Dorsolateral prefrontal cortex (tissue), 120 donors: ENCODE measurements at regions of chr18 and their contacts with region 1.

Region 1: DNA sequence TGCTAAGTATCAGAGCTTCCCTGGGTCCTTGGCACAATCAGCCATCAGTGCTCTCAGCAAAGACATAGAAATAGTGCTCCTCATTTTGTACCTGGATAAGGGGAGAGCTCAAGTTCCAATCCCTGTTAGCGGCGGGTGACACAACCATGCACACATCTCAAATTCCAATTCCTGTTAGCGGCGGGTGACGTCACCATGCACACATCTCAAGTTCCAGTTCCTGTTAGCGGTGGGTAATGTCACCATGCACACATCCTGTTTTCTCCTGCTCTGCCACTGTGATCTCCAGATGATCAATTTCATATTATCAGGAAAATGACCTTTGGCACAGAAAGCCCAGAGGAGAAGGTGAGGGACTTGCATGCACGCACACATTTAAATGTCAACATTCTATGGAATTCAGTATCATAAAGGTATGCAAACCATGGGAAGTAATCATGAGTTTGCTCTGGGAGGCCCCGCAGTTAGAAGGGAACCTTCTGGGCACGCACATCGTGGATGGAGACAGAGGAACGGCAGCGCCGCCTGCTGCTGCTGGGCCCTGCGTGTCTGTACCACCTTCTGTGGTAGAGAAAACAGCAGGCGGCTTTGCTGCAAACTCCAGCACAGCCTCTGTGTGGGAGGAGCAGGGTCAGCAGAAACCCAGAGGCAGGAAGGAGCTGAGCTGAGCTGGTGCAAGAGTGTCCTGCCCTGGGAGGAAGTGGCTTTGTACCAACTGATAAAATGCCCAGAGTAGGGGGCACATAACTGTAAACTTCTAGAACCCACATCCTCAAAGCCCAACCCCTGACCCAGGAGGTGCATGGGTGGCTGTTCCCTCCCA is 77.8 kb downstream of the MBP start:
- DNase-seq: peak; percentile 35 to 94 (median 92)
- H3K4me3 ChIP-seq: peak overlapping the region in 54 of 59 donors; percentile 1 to 70 (median 46)
- H3K27ac ChIP-seq: peak overlapping the region; percentile 69 to 100 (median 95)
- H3K27me3 ChIP-seq: no peaks in the 10 kb centered on the region
- CTCF ChIP-seq: peak; percentile 39 to 97 (median 88)

Region 2: GRCh38 chr18:76822510-76823160 is 232.2 kb before region 1 on chr18 and contains the start of gene ZNF236:
- intact Hi-C with region 1: loop called in 1 of 2 experiments (anchors 5 kb)
- DNase-seq: peak in 8 of 10 donors; percentile 41 to 77 (median 56)
- H3K4me3 ChIP-seq: peak within 1 kb of the TSS; percentile 74 to 99 (median 92)
- H3K27ac ChIP-seq: peak within 1 kb of the TSS; percentile 87 to 99 (median 95)
- H3K27me3 ChIP-seq: no peaks in the 10 kb centered on the region
- CTCF ChIP-seq: no peak
- total RNA-seq, gene ZNF236: 29.4 to 62.0 (median 40.2) TPM

Region 3: DNA sequence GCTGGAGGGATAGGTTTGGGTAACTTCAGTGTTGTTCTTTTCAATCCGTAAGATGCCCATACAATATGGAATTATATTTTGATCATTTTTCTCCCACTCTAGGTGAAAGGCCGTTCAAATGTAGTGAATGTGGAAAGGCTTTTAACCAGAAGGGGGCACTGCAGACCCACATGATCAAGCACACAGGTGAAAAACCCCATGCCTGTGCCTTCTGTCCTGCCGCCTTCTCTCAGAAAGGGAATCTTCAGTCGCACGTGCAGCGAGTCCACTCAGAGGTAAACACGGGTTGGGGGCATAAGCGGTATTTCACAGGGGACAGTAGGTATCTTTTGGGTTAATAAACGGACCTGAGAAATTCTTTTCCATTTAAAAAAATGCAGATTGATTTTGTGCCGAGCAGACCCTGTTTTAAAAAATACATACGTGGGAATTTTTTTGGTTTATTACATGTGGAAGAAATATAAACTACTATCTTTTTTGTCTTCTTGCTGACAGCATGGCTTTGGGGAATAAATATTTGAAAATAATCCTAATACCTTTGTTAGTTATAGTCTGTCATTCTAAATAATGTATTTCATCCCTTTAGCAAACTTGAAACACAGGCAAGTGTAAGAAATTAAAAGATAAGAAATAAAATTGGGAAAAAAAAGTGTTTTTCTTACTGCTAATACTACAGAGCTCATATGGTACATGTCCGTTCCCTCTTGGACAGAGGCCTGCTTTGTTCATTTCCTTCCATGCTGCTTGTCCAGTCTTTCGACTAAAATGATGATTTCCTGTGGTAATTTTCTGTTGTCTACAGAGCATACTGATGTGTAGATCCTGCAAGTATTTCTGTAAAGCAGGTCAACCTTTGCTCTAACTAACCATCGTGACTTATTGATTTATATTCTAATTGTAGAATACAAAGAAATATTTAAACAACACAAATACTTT is 179.2 kb before region 1 on chr18:
- intact Hi-C with region 1: loop called in 1 of 2 experiments (anchors 5 kb)
- DNase-seq: peak in 3 of 10 donors; percentile 36 to 66 (median 60)
- H3K4me3 ChIP-seq: peak overlapping the region in 5 of 59 donors; percentile 3 to 31 (median 18)
- H3K27ac ChIP-seq: peak overlapping the region in 5 of 59 donors; percentile 1 to 62 (median 35)
- H3K27me3 ChIP-seq: no peaks in the 10 kb centered on the region
- CTCF ChIP-seq: peak; percentile 55 to 81 (median 70)

Region 4: GRCh38 chr18:76922107-76922506 is 132.7 kb before region 1 on chr18:
- intact Hi-C with region 1: loop called (anchors 2 to 5 kb)
- DNase-seq: peak in 9 of 10 donors; percentile 59 to 81 (median 75)
- H3K4me3 ChIP-seq: no peak overlapping the region
- H3K27ac ChIP-seq: peak overlapping the region in 2 of 59 donors; percentile 2 to 14
- H3K27me3 ChIP-seq: no peaks in the 10 kb centered on the region
- CTCF ChIP-seq: peak; percentile 33 to 98 (median 79)

Region 5: DNA sequence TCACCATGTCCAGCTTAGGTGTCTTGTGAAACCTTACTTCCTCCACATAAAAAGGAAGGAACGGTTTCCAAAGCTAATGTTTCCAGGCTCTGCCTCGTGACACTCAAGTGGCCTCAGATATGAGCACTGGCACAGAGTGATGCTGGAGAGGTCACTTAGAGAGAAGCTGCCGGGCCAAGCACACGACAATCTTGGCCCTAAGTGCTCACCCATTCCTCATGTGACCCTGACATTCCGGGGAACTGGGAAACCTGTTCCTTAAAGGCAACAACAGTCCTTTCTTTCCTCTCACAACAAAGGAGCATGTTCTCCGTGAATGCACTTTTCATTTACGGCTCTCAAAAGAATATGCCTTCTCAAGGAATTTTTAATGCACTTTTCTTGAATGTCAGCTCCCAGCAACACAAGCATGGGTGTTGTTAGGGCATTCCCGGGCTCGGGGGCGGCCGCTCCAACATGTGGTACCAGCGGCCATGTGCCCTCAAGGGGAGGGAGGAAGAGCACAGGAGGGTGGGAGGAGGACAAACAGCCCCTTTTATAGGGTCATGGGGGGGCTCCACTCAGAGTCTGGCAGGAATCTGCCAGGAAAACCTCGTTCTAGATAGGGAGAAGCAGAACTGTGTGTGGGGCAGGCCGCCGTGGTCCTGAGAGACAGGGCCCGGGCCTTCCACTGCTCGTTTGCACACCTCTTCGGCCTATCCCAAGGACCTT is 40.9 kb before region 1 on chr18:
- intact Hi-C with region 1: loop called (anchors 1 to 2 kb)
- DNase-seq: peak in 3 of 10 donors; percentile 43 to 65 (median 48)
- H3K4me3 ChIP-seq: peak overlapping the region; percentile 4 to 84 (median 61)
- H3K27ac ChIP-seq: peak overlapping the region in 57 of 59 donors; percentile 2 to 99 (median 90)
- H3K27me3 ChIP-seq: no peaks in the 10 kb centered on the region
- CTCF ChIP-seq: peak in 2 of 56 donors; percentile 8 to 19